ENCODE measurements at regions of chr10 and their contacts with region 1.

Region 1: DNA sequence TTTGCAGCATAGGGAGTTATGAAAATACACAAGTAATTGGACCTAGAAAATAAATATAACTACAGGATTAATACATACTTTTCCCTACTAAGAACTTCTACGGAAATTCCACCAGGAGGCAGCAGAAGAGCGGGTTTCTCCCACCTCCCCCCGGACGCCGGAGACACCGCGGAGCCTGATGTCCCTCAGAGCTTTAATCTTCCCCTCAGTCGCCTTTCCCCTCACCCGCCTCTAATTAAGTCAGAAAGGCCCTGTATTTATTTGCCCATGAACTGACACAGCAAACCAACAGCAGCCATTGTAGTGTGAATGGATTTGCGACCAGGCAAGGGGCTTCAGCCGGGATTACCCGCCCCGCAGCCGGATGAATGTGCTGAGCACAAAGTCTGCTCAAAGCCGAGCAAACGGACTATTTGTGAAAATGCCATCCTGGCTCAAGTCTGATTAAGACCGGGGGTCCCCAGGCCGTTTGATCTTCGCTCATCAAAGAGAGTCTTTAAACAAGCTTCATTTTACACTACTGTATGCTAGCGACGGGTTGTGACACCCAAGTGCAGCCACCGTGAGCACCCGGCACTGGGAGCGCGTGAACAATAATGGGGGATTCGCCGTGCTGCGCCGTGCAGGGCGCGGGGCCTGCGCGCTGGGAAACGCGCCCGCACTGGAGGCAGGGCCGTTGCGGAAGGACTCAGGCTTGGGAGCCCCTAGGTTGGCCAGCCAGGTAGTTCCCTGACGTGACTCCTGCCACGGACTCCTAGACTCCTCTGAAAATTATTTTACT is 5.6 kb upstream of the DKK1 start:
- DNase-seq: no peak
- H3K4me3 ChIP-seq: peak overlapping the region; percentile 28
- H3K27me3 ChIP-seq: no peaks in the 10 kb centered on the region
- CTCF ChIP-seq: peak; percentile 68

Region 2: GRCh38 chr10:52368741-52369140 is 60.3 kb after region 1 on chr10:
- CTCF ChIA-PET with region 1: no interaction called
- POLR2A ChIA-PET with region 1: no interaction called
- DNase-seq: no peak
- H3K4me3 ChIP-seq: no peak overlapping the region
- H3K27me3 ChIP-seq: no peaks in the 10 kb centered on the region
- CTCF ChIP-seq: no peak

Region 3: GRCh38 chr10:52517012-52517411 is 208.6 kb after region 1 on chr10:
- CTCF ChIA-PET with region 1: interaction called, 11 read pairs
- POLR2A ChIA-PET with region 1: no interaction called
- DNase-seq: no peak
- H3K4me3 ChIP-seq: no peak overlapping the region
- H3K27me3 ChIP-seq: no peaks in the 10 kb centered on the region
- CTCF ChIP-seq: no peak

Region 4: DNA sequence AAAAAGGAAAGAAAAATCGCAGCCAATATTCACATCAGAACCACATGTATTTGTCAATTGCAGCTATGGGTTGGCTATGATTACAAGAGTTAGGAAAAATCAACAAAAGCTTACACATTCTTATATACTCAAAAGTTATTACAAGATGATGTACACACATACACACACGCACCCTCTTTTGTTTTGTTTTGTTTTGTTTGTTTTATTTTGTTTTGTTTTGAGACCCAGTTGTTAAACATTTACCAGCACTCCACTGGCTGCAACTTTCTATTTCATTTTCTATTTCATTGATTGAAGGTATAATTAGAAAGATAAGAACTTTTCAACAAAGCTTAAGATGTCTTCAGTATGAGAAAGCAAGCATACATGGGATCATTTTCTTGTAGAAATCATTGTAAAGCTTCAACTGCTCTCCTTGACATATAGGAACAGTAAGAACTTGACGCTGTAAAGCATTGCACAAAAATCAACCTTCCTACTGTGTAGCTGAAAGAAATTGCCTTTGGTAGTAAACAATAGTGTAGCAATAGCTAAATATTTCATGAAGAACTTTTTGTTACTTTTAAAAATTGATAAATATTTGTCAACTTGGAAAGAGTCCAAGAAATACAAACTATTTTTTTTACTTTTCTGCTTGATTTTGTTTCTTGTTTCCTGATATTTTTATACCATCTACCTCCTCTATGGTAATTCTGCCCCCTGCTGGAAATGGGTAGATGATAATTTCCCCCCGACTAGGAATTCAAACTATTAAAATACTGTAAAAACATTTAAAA is 258.2 kb after region 1 on chr10:
- CTCF ChIA-PET with region 1: interaction called, 63 read pairs
- POLR2A ChIA-PET with region 1: no interaction called
- DNase-seq: no peak
- H3K4me3 ChIP-seq: no peak overlapping the region
- H3K27me3 ChIP-seq: no peaks in the 10 kb centered on the region
- CTCF ChIP-seq: peak; percentile 58

Region 5: GRCh38 chr10:52729271-52730104 is 421.0 kb after region 1 on chr10:
- CTCF ChIA-PET with region 1: interaction called, 25 read pairs
- POLR2A ChIA-PET with region 1: no interaction called
- DNase-seq: peak; percentile 4
- H3K4me3 ChIP-seq: no peak overlapping the region
- H3K27me3 ChIP-seq: no peaks in the 10 kb centered on the region
- CTCF ChIP-seq: peak; percentile 49

Measured in BJ (cell line).